ENCODE measurements at regions of chr3 and their contacts with region 1.

Region 1: GRCh38 chr3:24185738-24186384 is 240.8 kb downstream of the NR1D2 start:
- H3K4me3 ChIP-seq: no peak overlapping the region
- H3K27ac ChIP-seq: no peak overlapping the region
- H3K4me1 ChIP-seq: no peaks in the 10 kb centered on the region
- CTCF ChIP-seq: peak; percentile 47; the same call in 1 of the 2 replicates

Region 2: DNA sequence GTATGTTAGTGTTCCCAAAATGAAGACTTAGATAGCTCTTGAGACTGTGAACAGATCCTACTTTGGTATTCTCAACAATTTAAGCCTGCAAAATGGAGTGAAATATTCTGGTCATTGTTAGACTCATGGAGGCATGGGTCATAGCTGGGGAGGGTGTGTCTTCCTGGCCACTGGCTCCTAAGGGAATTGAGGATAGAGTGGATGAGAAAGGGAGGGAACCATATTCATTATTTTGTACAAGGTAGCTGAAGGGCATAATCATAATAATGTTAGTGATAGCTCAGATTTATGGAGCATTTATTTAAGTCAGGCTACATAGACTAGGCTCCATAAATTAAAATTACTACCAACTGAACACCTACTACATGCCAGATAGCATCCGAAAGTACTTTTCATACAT is 12.9 kb after region 1 on chr3:
- CTCF ChIA-PET with region 1: interaction called, 10 read pairs
- POLR2A ChIA-PET with region 1: interaction called, 5 read pairs
- H3K4me3 ChIP-seq: no peak overlapping the region
- H3K27ac ChIP-seq: no peak overlapping the region
- H3K4me1 ChIP-seq: no peaks in the 10 kb centered on the region
- CTCF ChIP-seq: no peak

Region 3: GRCh38 chr3:24237971-24238767 is 52.3 kb after region 1 on chr3:
- CTCF ChIA-PET with region 1: interaction called, 28 read pairs
- POLR2A ChIA-PET with region 1: interaction called, 9 read pairs
- H3K4me3 ChIP-seq: no peak overlapping the region
- H3K27ac ChIP-seq: no peak overlapping the region
- H3K4me1 ChIP-seq: peaks cover 5% of the 10 kb centered on the region; the same call in 1 of the 2 replicates
- CTCF ChIP-seq: peak; percentile 81

Region 4: DNA sequence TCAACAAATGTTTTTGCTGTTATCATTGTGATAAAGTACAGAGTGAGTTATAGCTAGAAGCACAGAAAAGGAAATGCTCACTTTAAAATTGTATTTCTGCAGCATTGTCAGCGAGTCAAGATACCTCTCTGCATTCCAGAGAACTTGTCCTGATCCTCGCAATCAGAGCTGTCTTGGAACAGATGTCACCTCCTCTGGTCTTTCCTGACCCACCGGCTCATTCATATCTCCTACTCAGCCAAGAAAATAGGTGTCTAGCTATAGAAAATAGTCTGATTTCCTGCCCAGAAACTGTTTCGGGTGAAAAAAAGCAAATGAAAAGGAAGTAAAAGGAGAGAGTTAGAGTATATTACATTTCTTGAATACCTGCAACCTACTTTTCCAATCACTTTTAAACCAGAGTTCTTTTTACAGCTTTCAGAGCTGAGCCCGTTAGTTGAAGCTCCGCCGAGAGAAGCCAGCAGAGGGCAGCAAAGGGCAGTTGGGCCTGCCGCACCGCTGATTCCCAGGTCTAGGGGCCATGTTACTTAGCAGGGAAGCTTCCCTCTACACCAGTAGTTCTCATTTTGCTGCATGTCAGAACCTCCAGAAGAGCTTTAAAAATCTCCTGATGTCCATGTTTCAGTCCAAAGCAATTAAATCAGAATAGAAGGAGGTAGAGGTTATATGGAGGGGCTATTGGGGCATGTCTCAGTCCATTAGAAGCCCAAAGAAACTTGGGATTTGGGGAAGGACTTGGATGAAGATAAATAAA is 494.5 kb after region 1 on chr3:
- CTCF ChIA-PET with region 1: interaction called, 12 read pairs
- POLR2A ChIA-PET with region 1: no interaction called
- H3K4me3 ChIP-seq: no peak overlapping the region
- H3K27ac ChIP-seq: no peak overlapping the region
- H3K4me1 ChIP-seq: no peaks in the 10 kb centered on the region
- CTCF ChIP-seq: peak; percentile 24; the same call in 1 of the 2 replicates

Measured in HEK293 (cell line).